Thyroid gland (tissue), 4 donors: ENCODE measurements at regions of chr4 and their contacts with region 1.

Region 1: GRCh38 chr4:176207839-176208238 is 12.5 kb upstream of the SPATA4 start:
- DNase-seq: no peak
- H3K4me3 ChIP-seq: no peak overlapping the region
- H3K27ac ChIP-seq: no peak overlapping the region
- H3K4me1 ChIP-seq: no peaks in the 10 kb centered on the region
- H3K27me3 ChIP-seq: no peaks in the 10 kb centered on the region
- CTCF ChIP-seq: no peak
- POLR2A ChIP-seq: no peak

Region 2: GRCh38 chr4:176123710-176124407 is 84.0 kb before region 1 on chr4:
- intact Hi-C with region 1: no loop called
- DNase-seq: peak; percentile 37 to 49
- H3K4me3 ChIP-seq: no peak overlapping the region
- H3K27ac ChIP-seq: no peak overlapping the region
- H3K4me1 ChIP-seq: no peaks in the 10 kb centered on the region
- H3K27me3 ChIP-seq: no peaks in the 10 kb centered on the region
- CTCF ChIP-seq: peak in 5 of 6 experiments; percentile 9 to 69 (median 44)
- POLR2A ChIP-seq: no peak

Region 3: DNA sequence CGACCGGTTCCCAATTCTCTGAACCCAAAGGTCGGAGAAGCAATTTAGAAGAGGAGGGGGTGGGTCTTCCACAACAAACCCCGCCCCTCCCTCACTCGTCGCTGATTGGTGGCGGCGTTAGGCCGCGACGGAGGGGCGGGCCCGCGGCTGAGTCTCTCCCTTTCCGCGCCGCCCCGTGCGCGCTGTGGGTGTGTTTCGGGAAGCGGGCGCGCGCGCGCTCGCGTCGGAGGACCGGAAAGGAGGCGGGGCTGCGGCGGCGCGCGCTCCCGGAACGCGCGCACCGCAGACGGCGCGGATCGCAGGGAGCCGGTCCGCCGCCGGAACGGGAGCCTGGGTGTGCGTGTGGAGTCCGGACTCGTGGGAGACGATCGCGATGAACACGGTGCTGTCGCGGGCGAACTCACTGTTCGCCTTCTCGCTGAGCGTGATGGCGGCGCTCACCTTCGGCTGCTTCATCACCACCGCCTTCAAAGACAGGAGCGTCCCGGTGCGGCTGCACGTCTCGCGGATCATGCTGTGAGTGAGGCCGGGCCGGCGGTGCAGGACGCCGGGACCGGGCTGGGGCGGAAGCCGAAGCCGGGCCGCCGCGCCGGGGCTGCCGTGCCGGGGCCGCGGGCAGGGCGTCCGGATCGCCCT is 112.0 kb after region 1 on chr4 and contains the start of gene SPCS3:
- intact Hi-C with region 1: loop called (anchors 10 kb)
- DNase-seq: peak; percentile 96 to 97
- H3K4me3 ChIP-seq: peak within 1 kb of the TSS; percentile 63 to 78 (median 64)
- H3K27ac ChIP-seq: peak within 1 kb of the TSS; percentile 89 to 93 (median 92)
- H3K4me1 ChIP-seq: peaks cover 15 to 18% of the 10 kb centered on the region in 2 donors
- H3K27me3 ChIP-seq: no peaks in the 10 kb centered on the region
- CTCF ChIP-seq: no peak
- POLR2A ChIP-seq: peak; percentile 72 to 93
- total RNA-seq, gene SPCS3: 129 to 149 (median 136) TPM